PC-3 (cell line): ENCODE measurements at regions of chr16 and their contacts with region 1.

Region 1: DNA sequence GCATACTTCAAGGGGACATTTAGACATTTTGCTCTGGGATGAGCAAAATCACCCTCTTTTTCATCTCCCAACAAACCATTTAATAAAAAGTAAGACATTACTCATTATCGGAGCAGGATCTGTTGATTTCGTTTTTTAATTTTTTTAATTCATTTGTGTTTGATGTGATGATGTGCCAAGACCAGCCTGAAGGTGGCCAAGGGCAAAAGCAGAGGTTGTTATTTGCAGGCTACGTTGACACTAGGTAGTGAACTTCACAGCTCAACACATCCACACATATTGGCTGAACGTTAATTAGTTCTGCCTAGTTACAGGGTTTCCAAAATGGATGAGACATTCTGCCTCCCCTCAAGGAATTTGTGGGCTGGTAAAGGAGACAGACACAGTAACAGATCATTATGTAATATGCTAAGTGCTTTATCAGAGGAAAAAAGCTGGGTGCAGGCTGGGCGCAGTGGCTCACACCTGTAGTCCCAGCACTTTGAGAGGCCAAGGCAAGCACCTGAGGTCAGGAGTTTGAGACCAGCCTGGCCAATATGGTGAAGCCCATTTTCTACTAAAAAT is 26.1 kb downstream of the BMERB1 start:
- DNase-seq: no peak
- ATAC-seq: no peak
- H3K4me3 ChIP-seq: no peak overlapping the region
- H3K27ac ChIP-seq: peak overlapping the region; percentile 93
- H3K4me1 ChIP-seq: peaks cover 27% of the 10 kb centered on the region
- H3K27me3 ChIP-seq: no peaks in the 10 kb centered on the region
- CTCF ChIP-seq: 0 out of 2 replicates have a peak, but pooled peaks have one; percentile 14

Region 2: GRCh38 chr16:15440852-15441251 is 19.6 kb before region 1 on chr16:
- CTCF ChIA-PET with region 1: no interaction called
- POLR2A ChIA-PET with region 1: no interaction called
- intact Hi-C with region 1: loop called (anchors 2 kb)
- DNase-seq: peak; percentile 80
- ATAC-seq: peak; percentile 83
- H3K4me3 ChIP-seq: peak overlapping the region; percentile 42; the same call in 1 of the 2 replicates
- H3K27ac ChIP-seq: peak overlapping the region; percentile 95
- H3K4me1 ChIP-seq: peaks cover 35% of the 10 kb centered on the region
- H3K27me3 ChIP-seq: no peaks in the 10 kb centered on the region
- CTCF ChIP-seq: no peak

Region 3: DNA sequence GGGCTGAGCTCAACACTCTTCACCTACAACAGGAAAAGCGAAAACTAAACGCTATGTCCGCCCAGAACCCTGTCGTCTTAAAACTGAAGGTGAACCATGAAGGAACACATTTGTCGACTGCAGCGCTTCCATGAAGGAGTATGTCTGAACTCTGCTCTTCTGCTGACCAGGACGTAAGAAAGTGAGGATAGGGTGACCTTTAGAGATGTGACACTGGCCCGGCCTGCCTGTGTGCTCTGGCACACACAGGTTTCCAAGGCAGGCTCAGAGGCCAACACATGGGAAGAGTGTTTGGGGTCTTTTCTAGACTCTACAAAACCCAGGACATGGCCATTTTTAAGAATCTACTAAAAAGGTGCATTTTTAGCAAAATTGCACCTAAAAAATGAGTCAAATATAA is 161.4 kb after region 1 on chr16:
- CTCF ChIA-PET with region 1: no interaction called
- POLR2A ChIA-PET with region 1: no interaction called
- intact Hi-C with region 1: no loop called
- DNase-seq: no peak
- ATAC-seq: no peak
- H3K4me3 ChIP-seq: no peak overlapping the region
- H3K27ac ChIP-seq: no peak overlapping the region
- H3K4me1 ChIP-seq: no peaks in the 10 kb centered on the region
- H3K27me3 ChIP-seq: no peaks in the 10 kb centered on the region
- CTCF ChIP-seq: no peak

Region 4: GRCh38 chr16:15822957-15823356 is 362.5 kb after region 1 on chr16:
- CTCF ChIA-PET with region 1: no interaction called
- POLR2A ChIA-PET with region 1: no interaction called
- intact Hi-C with region 1: no loop called
- DNase-seq: no peak
- ATAC-seq: no peak
- H3K4me3 ChIP-seq: no peak overlapping the region
- H3K27ac ChIP-seq: no peak overlapping the region
- H3K4me1 ChIP-seq: no peaks in the 10 kb centered on the region
- H3K27me3 ChIP-seq: no peaks in the 10 kb centered on the region
- CTCF ChIP-seq: no peak